ENCODE measurements at regions of chr6 and their contacts with region 1.

Region 1: GRCh38 chr6:36423101-36423824 is 19.4 kb downstream of the PXT1 start:
- DNase-seq: peak; percentile 98
- H3K4me3 Mint-ChIP-seq: peak overlapping the region; percentile 81
- H3K27ac Mint-ChIP-seq: peak overlapping the region; percentile 77
- H3K4me1 Mint-ChIP-seq: peaks cover 23% of the 10 kb centered on the region
- H3K27me3 Mint-ChIP-seq: peaks cover 1% of the 10 kb centered on the region

Region 2: GRCh38 chr6:36373368-36374019 is 49.8 kb before region 1 on chr6:
- CTCF ChIA-PET with region 1: no interaction called
- POLR2A ChIA-PET with region 1: no interaction called
- DNase-seq: no peak
- H3K4me3 Mint-ChIP-seq: no peak overlapping the region
- H3K27ac Mint-ChIP-seq: no peak overlapping the region
- H3K4me1 Mint-ChIP-seq: peaks cover 11% of the 10 kb centered on the region
- H3K27me3 Mint-ChIP-seq: no peaks in the 10 kb centered on the region

Region 3: DNA sequence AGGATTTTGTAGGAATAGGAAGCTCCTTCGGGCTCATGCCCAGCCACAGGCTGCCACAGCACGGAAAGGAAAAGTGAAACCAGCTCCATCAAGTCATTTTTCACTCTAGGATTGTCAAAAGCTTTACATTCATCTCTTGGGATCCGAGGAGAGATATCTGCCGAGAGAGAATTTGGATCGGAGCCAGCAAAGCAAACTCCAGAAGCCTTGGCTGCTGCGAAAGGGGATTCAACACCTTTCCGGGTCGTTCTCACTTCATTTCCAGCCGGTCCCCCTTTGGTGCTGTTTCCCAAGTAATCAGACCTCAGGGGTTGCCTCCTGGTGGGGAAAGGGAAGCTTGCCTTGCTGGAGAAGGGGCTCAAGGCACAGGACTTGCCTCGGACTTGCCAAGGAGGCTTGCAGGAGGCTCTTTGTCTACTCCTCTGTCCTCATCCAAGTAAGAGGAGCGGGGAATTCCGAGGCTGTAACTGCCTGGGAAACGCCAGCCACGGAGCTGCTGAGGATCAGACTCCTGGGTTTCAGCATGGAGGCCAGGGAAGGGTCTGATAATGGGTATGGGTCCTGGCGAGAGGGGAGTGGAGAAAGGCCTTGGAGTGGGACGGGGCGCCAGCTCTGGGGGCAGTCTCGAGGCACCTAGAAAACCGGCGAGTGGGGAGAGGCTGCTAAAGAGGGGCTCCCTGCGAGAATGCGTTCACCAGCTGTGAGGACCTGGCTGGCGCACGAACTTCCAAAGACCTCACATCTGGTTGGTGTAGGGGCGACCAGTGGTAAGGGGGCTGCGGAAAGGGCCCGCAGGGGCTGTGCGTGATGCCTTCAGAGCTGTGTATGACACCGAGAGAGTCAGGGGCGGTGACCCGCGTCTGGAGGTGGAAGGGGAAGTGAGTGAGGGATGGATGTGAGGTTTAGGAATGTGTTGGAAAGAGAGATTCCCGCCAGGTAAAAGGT is 36.5 kb before region 1 on chr6:
- CTCF ChIA-PET with region 1: no interaction called
- POLR2A ChIA-PET with region 1: interaction called, 12 read pairs
- DNase-seq: peak; percentile 33
- H3K4me3 Mint-ChIP-seq: peak overlapping the region; percentile 99
- H3K27ac Mint-ChIP-seq: peak overlapping the region; percentile 89
- H3K4me1 Mint-ChIP-seq: peaks cover 61% of the 10 kb centered on the region
- H3K27me3 Mint-ChIP-seq: peaks cover 18% of the 10 kb centered on the region

Region 4: GRCh38 chr6:36442671-36443470 is 19.6 kb after region 1 on chr6 and contains the starts of genes KCTD20 and PXT1:
- CTCF ChIA-PET with region 1: interaction called, 15 read pairs
- POLR2A ChIA-PET with region 1: interaction called, 19 read pairs
- DNase-seq: peak; percentile 90
- H3K4me3 Mint-ChIP-seq: peak within 1 kb of the TSS; percentile 97
- H3K27ac Mint-ChIP-seq: peak within 1 kb of the TSS; percentile 97
- H3K4me1 Mint-ChIP-seq: peaks cover 39% of the 10 kb centered on the region
- H3K27me3 Mint-ChIP-seq: no peaks in the 10 kb centered on the region
- total RNA-seq, gene KCTD20: 60.7 to 63.6 TPM
- total RNA-seq, gene PXT1: 0.35 TPM in 1 of 2 experiments, not detected in the other

Region 5: GRCh38 chr6:36578431-36578830 is 155.2 kb after region 1 on chr6:
- CTCF ChIA-PET with region 1: interaction called, 26 read pairs
- POLR2A ChIA-PET with region 1: interaction called, 5 read pairs
- DNase-seq: no peak
- H3K4me3 Mint-ChIP-seq: no peak overlapping the region
- H3K27ac Mint-ChIP-seq: no peak overlapping the region
- H3K4me1 Mint-ChIP-seq: peaks cover 11% of the 10 kb centered on the region
- H3K27me3 Mint-ChIP-seq: no peaks in the 10 kb centered on the region

Region 6: GRCh38 chr6:36642913-36643817 is 219.9 kb after region 1 on chr6:
- CTCF ChIA-PET with region 1: no interaction called
- POLR2A ChIA-PET with region 1: no interaction called
- DNase-seq: no peak
- H3K4me3 Mint-ChIP-seq: no peak overlapping the region
- H3K27ac Mint-ChIP-seq: no peak overlapping the region
- H3K4me1 Mint-ChIP-seq: no peaks in the 10 kb centered on the region
- H3K27me3 Mint-ChIP-seq: peaks cover 2% of the 10 kb centered on the region

Measured in activated CD4-positive, alpha-beta memory T cell treated with anti-CD3 and anti-CD28 coated beads, Interleukin-2, amount 10 ng/mL, durations not matched to agents 7 days and 5 days (primary cell).